ENCODE measurements at regions of chr22 and their contacts with region 1.

Region 1: GRCh38 chr22:30005213-30005857 is 74.9 kb upstream of the HORMAD2 start:
- DNase-seq: peak; percentile 23 to 90
- H3K4me3 ChIP-seq: no peak overlapping the region
- H3K27ac ChIP-seq: no peak overlapping the region
- H3K4me1 ChIP-seq: peaks cover 0 to 2% (median 0%) of the 10 kb centered on the region in 4 experiments; a peak in 3 of 7 replicates
- H3K27me3 ChIP-seq: no peaks in the 10 kb centered on the region
- CTCF ChIP-seq: peak; percentile 77 to 97 (median 84)
- EP300 ChIP-seq: no peak
- POLR2A ChIP-seq: no peak
- RAD21 ChIP-seq: peak; percentile 95

Region 2: DNA sequence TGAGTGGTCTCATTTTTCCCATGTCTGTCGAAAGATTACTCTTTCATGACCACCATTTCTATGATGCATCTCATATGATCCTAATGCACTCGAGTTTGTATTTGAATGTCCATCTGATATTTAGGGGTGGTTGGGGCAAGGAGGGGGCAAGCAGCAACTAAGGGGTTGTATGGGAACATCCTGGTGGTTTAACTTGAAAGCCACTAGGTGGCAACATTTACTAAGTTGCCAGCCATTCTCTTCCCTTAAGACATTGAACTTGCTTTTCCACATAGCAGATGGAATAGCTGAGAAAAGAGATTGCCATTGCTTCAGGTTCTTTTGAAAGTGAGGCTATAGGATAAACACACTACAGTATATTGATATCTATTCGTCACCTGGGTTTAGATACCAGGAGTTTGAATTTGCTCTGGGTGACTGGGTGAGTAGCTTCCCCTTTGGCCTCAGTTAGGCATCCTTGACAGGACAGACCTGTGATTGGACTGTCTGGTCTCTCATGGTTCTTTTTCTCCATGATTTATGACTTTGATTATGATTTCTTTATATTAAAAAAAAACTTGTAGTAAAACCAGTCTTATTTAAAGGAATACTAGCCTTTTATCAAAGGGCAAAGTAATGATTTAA is 369.5 kb before region 1 on chr22:
- CTCF ChIA-PET with region 1: interaction called, 19 read pairs
- POLR2A ChIA-PET with region 1: no interaction called
- DNase-seq: no peak
- H3K4me3 ChIP-seq: no peak overlapping the region
- H3K27ac ChIP-seq: no peak overlapping the region
- H3K4me1 ChIP-seq: no peaks in the 10 kb centered on the region
- H3K27me3 ChIP-seq: no peaks in the 10 kb centered on the region
- CTCF ChIP-seq: peak; percentile 23 to 81 (median 71)
- EP300 ChIP-seq: no peak
- POLR2A ChIP-seq: no peak
- RAD21 ChIP-seq: peak; percentile 88 to 91

Region 3: DNA sequence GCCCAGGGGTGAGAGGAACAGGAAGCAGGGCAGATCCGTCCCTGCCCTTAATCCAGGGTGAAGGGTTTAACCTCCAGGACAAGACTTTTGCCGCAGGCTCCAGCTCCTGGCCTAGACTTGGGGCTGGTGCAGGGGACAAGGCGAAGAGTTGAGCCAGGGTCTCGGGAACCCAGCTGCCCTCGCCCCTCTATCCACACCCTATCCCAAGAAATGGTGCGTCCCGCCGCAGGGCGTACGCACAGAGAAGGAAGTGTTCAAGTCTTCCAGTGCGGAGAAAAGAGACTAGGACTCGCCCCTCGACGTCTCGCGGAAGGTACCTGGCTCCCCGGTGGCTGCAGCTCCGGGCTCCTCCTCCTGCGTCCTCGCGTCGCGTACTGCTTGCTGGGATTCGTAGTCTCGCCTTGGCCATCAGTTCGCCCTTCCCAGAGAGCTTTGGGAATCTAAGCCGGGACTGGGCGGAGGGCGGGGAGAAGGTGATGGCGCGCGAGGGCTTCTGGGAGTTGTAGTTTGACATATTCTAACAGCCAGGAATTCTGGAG is 238.6 kb before region 1 on chr22 and contains the start of gene ZMAT5:
- CTCF ChIA-PET with region 1: interaction called, 12 read pairs
- POLR2A ChIA-PET with region 1: no interaction called
- DNase-seq: peak; percentile 91 to 92
- H3K4me3 ChIP-seq: peak within 1 kb of the TSS; percentile 78 to 99 (median 92)
- H3K27ac ChIP-seq: peak within 1 kb of the TSS; percentile 91
- H3K4me1 ChIP-seq: peaks cover 3 to 5% (median 4%) of the 10 kb centered on the region in 4 experiments; a peak in 6 of 7 replicates
- H3K27me3 ChIP-seq: no peaks in the 10 kb centered on the region
- CTCF ChIP-seq: no peak
- EP300 ChIP-seq: no peak
- POLR2A ChIP-seq: peak; percentile 50 to 53
- RAD21 ChIP-seq: 0 out of 4 replicates have a peak, but pooled peaks of 1 of the 2 experiments have one; percentile 11
- total RNA-seq, gene ZMAT5: 13.8 and 14.0 TPM in 2 replicates

Region 4: GRCh38 chr22:29806196-29806595 is 199.1 kb before region 1 on chr22:
- CTCF ChIA-PET with region 1: interaction called, 11 read pairs
- POLR2A ChIA-PET with region 1: interaction called, 3 read pairs
- DNase-seq: no peak
- H3K4me3 ChIP-seq: no peak overlapping the region
- H3K27ac ChIP-seq: no peak overlapping the region
- H3K4me1 ChIP-seq: peaks cover 0 to 3% (median 0%) of the 10 kb centered on the region in 4 experiments; a peak in 1 of 7 replicates
- H3K27me3 ChIP-seq: no peaks in the 10 kb centered on the region
- CTCF ChIP-seq: no peak
- EP300 ChIP-seq: no peak
- POLR2A ChIP-seq: no peak
- RAD21 ChIP-seq: no peak

Region 5: DNA sequence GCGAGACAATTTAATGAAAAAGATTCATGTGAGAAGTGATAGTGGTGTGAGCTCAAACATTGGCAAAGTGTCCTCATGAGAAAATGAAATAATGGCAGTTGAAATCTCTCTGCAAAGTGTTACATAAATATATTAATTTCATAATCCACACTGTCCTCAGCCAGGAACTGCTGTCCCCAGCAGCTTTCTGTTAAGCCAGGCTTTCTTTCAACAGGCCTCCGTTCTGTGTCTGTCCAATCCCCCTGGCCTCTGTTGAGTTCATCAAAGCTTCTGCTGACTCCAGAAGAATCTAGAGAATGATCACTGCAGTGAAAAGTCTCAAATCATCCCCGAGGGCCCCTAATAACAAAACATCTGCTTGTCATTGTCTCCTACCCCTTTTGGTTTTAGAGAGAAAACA is 157.2 kb before region 1 on chr22:
- CTCF ChIA-PET with region 1: interaction called, 16 read pairs
- POLR2A ChIA-PET with region 1: no interaction called
- DNase-seq: no peak
- H3K4me3 ChIP-seq: no peak overlapping the region
- H3K27ac ChIP-seq: no peak overlapping the region
- H3K4me1 ChIP-seq: no peaks in the 10 kb centered on the region
- H3K27me3 ChIP-seq: no peaks in the 10 kb centered on the region
- CTCF ChIP-seq: no peak
- EP300 ChIP-seq: no peak
- POLR2A ChIP-seq: no peak
- RAD21 ChIP-seq: no peak

Region 6: DNA sequence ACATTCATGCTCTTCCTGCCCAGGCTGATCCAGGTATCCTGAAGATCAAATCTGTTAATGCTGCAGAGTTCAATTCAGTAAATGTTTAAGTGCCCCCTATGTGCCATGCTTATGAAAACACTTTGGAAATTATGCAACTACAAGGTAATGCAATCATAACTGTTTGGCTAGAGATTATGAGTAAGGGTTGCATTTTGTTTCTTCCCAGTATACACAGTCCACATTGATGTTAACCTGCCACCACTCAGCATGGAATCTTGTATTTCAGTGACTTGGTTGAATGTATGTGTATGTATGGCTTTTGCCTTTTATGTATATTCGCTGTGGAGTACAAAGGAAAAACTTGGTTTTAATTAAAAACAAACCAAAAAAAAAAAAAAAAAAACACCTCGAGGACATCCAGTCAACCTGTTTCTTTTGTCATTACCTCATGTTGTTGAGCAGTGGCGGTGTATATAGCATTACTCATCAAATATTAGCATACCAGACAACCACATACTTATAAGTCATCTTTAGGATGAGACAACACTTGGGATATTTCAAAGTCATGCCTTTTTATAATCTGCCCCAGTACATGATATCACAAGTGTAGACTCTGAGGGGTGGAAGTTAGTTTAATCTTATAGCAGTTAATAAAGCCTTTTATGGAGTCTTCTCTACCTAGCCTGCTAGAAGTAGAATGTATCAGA is 11.2 kb before region 1 on chr22:
- CTCF ChIA-PET with region 1: interaction called, 28 read pairs
- POLR2A ChIA-PET with region 1: no interaction called
- DNase-seq: no peak
- H3K4me3 ChIP-seq: no peak overlapping the region
- H3K27ac ChIP-seq: no peak overlapping the region
- H3K4me1 ChIP-seq: peaks cover 0 to 4% (median 3%) of the 10 kb centered on the region in 4 experiments; a peak in 3 of 7 replicates
- H3K27me3 ChIP-seq: no peaks in the 10 kb centered on the region
- CTCF ChIP-seq: no peak
- EP300 ChIP-seq: no peak
- POLR2A ChIP-seq: no peak
- RAD21 ChIP-seq: no peak